Ascending aorta (tissue), 2 donors: ENCODE measurements at regions of chr12 and their contacts with region 1.

Region 1: GRCh38 chr12:69388371-69388770 is 28.8 kb downstream of the YEATS4 start:
- DNase-seq: no peak
- H3K4me3 ChIP-seq: no peak overlapping the region
- H3K27ac ChIP-seq: no peak overlapping the region
- H3K4me1 ChIP-seq: peaks cover 0 to 6% of the 10 kb centered on the region in 2 donors
- H3K27me3 ChIP-seq: no peaks in the 10 kb centered on the region
- CTCF ChIP-seq: peak; percentile 42 to 75 (median 48)

Region 2: DNA sequence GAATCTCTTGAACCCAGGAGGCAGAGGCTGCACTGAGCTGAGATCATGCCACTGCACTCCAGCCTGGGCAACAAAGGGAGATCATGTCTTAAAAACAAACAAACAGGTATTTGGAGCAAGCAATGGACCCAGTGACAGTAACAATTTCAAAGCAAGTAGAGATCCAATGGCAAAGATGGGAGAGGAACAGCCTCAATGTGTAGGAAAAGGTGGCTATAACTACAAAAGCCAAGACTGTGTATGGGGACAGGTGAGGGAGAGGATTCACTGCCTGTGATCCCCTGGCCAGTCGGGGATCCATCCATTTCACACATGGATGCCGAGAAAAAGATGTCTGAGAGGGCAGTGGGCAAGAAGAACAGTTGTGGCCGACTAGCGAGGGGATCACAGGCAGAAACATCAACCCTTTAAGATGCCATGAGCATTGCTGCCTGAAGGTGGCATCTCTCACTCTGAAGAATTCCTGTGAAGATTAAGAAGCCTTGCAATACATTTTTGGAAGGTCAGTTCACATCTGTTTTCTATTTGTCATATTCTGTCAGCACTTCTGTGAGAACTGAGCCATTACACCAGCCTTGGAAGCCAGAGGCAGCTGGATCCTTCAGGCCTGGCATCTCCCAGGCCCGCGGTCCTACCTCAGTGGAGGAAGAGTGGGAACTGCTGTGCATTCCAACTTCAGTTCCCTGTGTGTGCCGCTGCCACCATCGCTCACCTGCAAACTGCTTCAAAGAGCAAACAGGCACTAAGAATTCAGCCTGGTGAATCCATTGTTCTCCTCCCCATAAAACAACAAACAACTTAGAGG is 27.3 kb after region 1 on chr12:
- intact Hi-C with region 1: no loop called
- DNase-seq: peak in 1 of 2 donors; percentile 85
- H3K4me3 ChIP-seq: peak overlapping the region in 1 of 2 donors; percentile 34
- H3K27ac ChIP-seq: peak overlapping the region in 1 of 2 donors; percentile 2
- H3K4me1 ChIP-seq: peaks cover 0 to 7% of the 10 kb centered on the region in 2 donors
- H3K27me3 ChIP-seq: no peaks in the 10 kb centered on the region
- CTCF ChIP-seq: peak; percentile 52 to 68 (median 67)

Region 3: GRCh38 chr12:69513297-69513696 is 124.9 kb after region 1 on chr12:
- intact Hi-C with region 1: no loop called
- DNase-seq: no peak
- H3K4me3 ChIP-seq: no peak overlapping the region
- H3K27ac ChIP-seq: no peak overlapping the region
- H3K4me1 ChIP-seq: peaks cover 0 to 22% of the 10 kb centered on the region in 2 donors
- H3K27me3 ChIP-seq: no peaks in the 10 kb centered on the region
- CTCF ChIP-seq: no peak

Region 4: DNA sequence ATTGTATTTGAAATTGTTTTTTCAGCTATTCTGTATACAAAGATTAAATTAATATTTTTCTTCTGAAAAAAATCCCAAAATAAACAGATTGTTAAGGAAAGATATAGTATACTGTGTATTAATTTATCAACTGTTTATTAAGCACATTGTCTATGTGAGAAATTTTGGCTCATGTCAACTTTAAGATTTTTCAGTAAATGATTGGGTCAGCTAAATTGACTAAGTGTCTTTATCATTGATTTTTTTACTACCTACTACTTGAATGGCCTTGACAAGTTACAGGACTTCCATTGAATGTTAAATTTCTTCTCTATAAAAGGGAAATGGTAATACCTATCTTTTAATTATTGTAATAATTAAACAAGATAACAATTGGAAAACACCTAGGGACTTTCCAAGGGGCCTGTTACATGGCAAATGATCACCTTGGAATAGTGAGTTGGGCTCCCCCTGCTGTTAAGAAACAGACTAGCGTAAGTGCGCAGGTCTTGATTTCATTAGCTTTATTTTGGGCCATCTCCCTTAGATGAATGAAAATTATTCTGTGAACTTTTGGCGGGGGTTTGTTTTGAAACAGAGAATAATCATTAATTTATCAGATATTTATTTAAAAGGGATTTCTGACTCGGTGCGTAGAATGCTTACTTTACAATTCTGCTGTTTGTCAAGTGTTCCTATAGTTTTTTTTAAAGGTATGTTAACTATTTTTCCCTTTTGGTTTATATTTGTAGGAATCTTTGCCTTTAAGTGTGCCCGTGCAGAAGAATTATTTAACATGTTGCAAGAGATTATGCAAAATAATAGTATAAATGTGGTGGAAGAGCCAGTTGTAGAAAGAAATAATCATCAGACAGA is 182.4 kb after region 1 on chr12:
- intact Hi-C with region 1: loop called (anchors 1 kb)
- DNase-seq: peak in 1 of 2 donors; percentile 73
- H3K4me3 ChIP-seq: no peak overlapping the region
- H3K27ac ChIP-seq: no peak overlapping the region
- H3K4me1 ChIP-seq: no peaks in the 10 kb centered on the region
- H3K27me3 ChIP-seq: no peaks in the 10 kb centered on the region
- CTCF ChIP-seq: peak; percentile 59 to 79 (median 76)